ENCODE measurements at regions of chr16 and their contacts with region 1.

Region 1: DNA sequence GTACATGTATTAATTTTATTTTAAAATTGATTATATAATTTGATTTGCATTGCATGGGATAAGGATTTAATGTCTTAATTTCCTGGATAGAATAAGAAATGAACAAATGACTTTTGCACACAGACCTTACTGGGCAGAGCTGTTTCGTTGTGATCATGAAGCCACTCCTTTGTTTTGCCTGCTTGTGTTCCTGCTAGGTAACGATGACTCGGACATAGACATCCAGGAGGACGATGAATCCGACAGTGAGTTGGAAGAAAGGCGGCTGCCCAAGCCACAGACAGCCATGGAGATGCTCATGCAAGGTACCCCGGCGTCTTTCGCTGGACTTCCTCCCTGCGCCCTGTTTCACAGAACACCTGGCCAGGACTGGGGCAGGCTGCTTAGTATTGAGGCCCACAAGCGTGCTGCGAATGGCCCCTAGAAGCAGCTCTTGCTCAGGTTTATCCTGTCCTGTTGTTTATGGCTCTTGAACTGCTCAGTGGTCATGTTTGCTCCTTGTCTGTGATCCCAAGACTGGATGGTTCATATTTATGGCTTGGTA is 29.6 kb downstream of the CLUAP1 start:
- DNase-seq: no peak
- ATAC-seq: no peak

Region 2: DNA sequence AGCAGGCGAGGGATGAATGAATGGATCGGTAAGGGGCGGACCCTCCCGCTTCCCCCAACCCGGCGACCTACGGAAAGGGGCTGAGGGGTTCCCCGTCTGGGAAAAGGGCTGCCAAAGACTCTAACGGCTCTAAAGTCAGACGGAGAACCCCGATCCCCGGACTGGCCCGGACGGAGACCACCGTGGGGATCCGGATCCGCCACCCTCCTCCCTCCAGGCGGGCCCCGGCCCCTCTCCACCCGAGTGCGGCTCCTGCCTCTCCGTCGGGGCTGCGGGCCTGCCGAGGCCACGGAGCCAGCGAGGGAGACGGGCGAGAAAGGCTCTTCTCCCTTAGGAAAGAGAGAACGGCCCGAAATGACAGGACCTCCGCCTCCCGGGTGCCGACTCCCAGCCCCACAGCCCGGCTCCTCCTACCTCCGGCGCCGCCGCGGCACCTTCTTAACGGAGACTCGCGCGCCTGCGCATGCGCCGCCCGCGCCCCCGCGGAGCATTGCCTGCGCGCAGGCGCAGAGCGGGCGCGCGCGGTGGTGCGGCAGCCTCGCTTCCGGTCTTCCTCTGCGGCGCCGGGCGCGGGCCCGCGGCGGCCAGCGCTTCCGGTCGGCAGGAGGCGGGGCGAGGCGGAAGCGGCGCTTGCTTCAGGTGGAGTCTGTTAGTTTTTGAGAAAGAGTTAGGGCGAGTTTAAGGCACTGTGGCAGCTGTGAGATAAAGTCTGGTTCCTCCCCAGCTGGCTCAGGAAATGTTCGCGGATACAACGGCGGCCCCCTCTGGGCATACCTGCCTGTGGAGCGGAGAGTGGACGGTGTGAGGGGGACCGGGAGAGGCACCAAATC is 80.9 kb after region 1 on chr16 and contains the start of gene SLX4:
- intact Hi-C with region 1: loop called (anchors 1 kb)
- DNase-seq: peak; percentile 96
- ATAC-seq: peak; percentile 98
- total RNA-seq, gene SLX4: 3.3 TPM